ENCODE measurements at regions of chr10 and their contacts with region 1.

Region 1: GRCh38 chr10:78071140-78071856 is 37.6 kb downstream of the RPS24 start:
- DNase-seq: no peak
- ATAC-seq: peak in 1 of 2 donors; percentile 59
- H3K4me3 ChIP-seq: no peak overlapping the region
- H3K27ac ChIP-seq: no peak overlapping the region
- H3K4me1 ChIP-seq: peaks cover 2% of the 10 kb centered on the region
- H3K27me3 ChIP-seq: no peaks in the 10 kb centered on the region

Region 2: GRCh38 chr10:78185693-78186055 is 114.4 kb after region 1 on chr10:
- intact Hi-C with region 1: loop called in 1 of 4 experiments (anchors 10 kb)
- DNase-seq: peak; percentile 50 to 84 (median 60)
- ATAC-seq: peak; percentile 76 to 85
- H3K4me3 ChIP-seq: no peak overlapping the region
- H3K27ac ChIP-seq: no peak overlapping the region
- H3K4me1 ChIP-seq: peaks cover 6% of the 10 kb centered on the region
- H3K27me3 ChIP-seq: no peaks in the 10 kb centered on the region

Measured in right cardiac atrium (tissue), 5 donors.